GM18951 (cell line): ENCODE measurements at regions of chr4 and their contacts with region 1.

Region 1: DNA sequence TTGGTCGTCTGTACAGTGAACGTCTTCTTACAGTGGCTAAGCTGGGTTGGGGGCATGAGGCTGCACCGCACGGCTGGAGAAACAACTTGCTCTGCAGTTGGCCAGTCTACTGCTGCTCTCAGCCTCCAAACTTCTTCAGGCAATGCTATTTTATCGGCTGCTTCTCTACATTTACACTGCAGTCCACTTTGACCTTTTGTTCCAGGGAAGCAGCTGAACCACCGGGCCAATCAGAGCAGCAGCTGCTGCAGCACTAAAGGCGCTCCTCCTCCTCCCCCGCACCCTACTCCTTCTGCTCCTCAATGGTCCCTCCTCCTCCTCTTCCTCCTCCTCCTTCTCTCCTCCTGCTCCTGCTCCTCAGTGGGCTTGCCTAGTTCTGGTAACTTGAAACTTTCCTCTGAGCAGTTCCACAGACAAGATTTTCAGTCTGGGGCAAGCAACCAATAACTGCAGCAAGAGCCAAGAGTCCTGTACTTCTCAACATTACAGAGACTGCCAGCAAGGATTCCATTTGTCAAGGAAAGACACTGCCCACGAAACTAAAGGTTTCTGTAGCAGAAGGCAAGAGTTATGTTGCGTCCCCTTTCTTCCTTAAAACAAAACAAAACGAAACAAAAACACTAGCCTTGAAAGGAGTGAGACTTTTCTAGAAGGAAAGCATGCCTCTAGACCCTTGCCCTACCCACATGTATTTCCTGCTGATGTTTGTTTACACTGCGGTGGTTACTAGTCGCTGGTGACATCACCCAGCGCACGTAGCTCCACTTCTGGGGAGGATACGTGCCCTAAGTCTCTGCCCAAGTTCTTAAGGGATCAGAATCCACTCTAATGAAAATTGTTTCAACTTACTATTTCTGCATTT is 125.7 kb upstream of the NAP1L5 start:
- POLR2A ChIP-seq: no peak

Region 2: GRCh38 chr4:88523325-88524129 is 299.8 kb before region 1 on chr4 and contains the start of gene PYURF:
- in situ Hi-C with region 1: loop called (anchors 25 kb)
- POLR2A ChIP-seq: peak; percentile 96

Region 3: GRCh38 chr4:88697588-88698329 is 125.5 kb before region 1 on chr4 and contains the start of gene NAP1L5:
- in situ Hi-C with region 1: no loop called
- POLR2A ChIP-seq: peak; percentile 55

Region 4: GRCh38 chr4:89024051-89024675 is 200.9 kb after region 1 on chr4:
- in situ Hi-C with region 1: loop called (anchors 5 kb)
- POLR2A ChIP-seq: no peak